PC-3 (cell line): ENCODE measurements at regions of chr10 and their contacts with region 1.

Region 1: GRCh38 chr10:95601116-95601719 is 40.0 kb upstream of the SORBS1 start:
- DNase-seq: peak; percentile 89
- ATAC-seq: peak; percentile 94
- H3K4me3 ChIP-seq: no peak overlapping the region
- H3K27ac ChIP-seq: no peak overlapping the region
- H3K4me1 ChIP-seq: no peaks in the 10 kb centered on the region
- H3K27me3 ChIP-seq: no peaks in the 10 kb centered on the region
- CTCF ChIP-seq: peak; percentile 93

Region 2: DNA sequence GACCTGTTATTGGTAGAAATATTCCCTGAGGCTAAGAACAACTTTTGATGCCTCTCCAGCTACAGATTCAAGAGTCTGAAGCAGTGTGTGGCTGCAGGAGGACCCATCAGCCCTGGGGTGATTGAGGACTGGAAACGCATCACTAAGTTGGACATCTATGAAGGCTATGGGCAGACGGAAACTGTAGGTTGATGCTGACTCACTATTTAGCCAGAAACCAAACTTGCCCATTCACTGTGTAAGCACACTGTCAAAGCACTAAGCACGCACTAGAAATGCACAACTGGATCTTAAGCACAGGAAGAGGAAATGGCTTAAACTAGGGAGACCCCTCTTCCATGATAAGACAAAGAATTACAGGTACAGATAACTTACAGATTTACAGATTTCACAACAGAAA is 386.4 kb before region 1 on chr10:
- CTCF ChIA-PET with region 1: no interaction called
- POLR2A ChIA-PET with region 1: no interaction called
- intact Hi-C with region 1: loop called (anchors 10 kb)
- DNase-seq: peak; percentile 87
- ATAC-seq: peak; percentile 95
- H3K4me3 ChIP-seq: peak overlapping the region; percentile 44; the same call in 1 of the 2 replicates
- H3K27ac ChIP-seq: peak overlapping the region; percentile 94
- H3K4me1 ChIP-seq: peaks cover 57% of the 10 kb centered on the region
- H3K27me3 ChIP-seq: no peaks in the 10 kb centered on the region
- CTCF ChIP-seq: no peak

Region 3: DNA sequence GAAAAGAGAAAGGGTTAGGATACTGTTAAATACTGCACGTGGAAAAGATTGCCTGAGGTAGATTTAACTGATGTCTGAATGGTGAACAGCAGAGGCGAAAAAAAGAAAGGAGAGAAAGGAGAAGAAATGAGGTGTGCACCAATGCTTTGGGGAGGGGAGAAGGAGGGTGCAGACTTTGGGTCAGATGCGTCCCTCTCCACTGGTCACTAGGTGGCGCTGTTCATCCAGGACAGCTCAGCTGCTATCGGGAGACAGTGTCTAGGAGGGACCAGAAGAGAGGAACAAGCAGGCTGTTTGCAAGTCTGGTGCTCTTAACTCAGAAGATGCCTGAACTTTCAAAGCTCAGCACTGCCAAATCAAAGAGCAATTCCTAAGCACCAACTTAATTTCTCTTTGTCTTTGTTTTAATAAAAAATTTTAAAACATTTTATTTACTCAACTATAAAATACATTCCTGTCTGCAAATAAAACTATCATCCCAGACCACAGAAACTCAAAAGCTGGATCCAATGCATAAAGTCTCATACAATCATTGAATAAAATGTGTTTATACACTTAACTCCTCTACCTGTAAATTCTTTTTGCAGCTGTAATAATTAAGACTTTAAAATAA is 226.5 kb before region 1 on chr10:
- CTCF ChIA-PET with region 1: interaction called, 11 read pairs
- POLR2A ChIA-PET with region 1: no interaction called
- intact Hi-C with region 1: loop called (anchors 1 kb)
- DNase-seq: peak; percentile 82
- ATAC-seq: peak; percentile 99
- H3K4me3 ChIP-seq: no peak overlapping the region
- H3K27ac ChIP-seq: no peak overlapping the region
- H3K4me1 ChIP-seq: no peaks in the 10 kb centered on the region
- H3K27me3 ChIP-seq: no peaks in the 10 kb centered on the region
- CTCF ChIP-seq: peak; percentile 86

Region 4: DNA sequence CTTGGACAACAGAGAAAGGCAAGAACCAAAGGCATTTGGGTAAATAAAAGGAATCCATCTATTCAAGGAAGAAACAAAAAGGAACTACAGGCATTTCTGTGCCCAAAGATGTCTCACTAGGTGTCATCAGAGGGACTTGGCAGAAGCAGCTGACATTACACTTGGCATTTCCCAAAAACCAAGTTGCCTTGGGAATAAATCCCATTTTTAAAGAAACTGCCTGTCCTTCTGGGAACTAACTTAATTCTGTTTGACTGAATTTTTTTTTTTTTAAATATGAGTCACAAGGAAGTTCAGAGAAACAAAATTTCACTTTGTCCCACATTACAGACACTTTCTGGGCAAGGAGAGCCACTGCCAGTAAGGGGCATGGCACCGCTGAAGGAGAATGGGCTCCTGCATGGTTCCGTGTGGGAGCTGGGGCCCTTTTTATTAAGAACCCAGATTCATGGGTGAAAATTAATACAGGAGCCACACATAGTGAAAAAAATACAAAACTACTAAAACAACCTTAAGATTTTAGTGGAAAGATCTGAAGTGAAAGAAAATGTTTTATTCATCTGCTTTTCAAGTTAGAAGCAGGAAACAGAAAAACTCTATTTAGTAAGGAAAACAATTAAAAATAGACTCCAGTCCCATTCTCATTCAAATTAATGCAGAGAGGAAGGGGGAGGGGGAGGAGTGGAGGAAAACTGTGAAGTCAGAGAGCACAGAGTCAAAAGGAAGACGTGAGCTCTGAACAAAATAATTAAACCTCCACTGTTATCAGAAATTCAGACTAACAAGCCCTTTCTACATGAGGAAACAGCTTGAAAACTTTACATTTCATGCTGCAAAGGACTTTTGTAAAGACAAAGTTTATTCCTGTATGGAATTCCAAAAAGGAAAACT is 192.0 kb before region 1 on chr10:
- CTCF ChIA-PET with region 1: no interaction called
- POLR2A ChIA-PET with region 1: interaction called, 14 read pairs
- intact Hi-C with region 1: no loop called
- DNase-seq: peak; percentile 66
- ATAC-seq: peak; percentile 55
- H3K4me3 ChIP-seq: peak overlapping the region; percentile 59
- H3K27ac ChIP-seq: peak overlapping the region; percentile 100
- H3K4me1 ChIP-seq: peaks cover 49% of the 10 kb centered on the region
- H3K27me3 ChIP-seq: no peaks in the 10 kb centered on the region
- CTCF ChIP-seq: no peak

Region 5: DNA sequence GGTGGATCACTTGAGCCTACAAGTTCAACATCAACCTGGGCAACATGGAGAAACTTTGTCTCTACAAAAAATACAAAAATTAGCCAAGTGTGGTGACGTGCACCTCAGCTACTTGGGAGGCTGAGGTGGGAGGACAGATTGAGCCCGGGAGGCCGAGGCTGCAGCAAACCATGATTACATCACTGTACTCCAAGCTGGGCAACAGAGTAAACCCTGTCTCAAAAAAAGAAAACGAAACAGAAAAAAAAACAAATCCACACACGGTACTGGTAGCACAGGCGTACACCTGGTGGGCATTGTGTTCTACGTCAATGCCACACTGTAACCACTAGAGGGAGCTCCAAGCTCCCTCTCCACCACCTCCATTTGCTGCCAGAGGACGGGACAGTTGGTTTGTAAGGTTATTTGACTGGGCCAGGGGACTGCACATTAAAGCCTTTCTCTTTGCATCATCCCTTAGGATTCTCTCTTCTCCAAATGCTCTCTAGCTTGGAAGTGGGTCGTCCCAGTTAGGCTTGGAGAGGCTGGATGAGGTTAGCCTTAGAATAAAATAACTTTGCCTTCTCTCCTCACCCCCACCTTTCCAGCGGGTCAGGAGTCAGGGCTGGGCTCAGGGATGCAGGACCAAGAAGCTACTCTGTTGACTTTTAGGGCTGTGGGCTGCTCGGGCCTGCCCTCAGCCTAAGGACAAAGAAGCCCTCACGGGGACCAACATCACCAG is 170.8 kb before region 1 on chr10:
- CTCF ChIA-PET with region 1: interaction called, 10 read pairs
- POLR2A ChIA-PET with region 1: no interaction called
- intact Hi-C with region 1: loop called (anchors 1 kb)
- DNase-seq: peak; percentile 75
- ATAC-seq: peak; percentile 95
- H3K4me3 ChIP-seq: peak overlapping the region; percentile 34
- H3K27ac ChIP-seq: peak overlapping the region; percentile 21
- H3K4me1 ChIP-seq: peaks cover 10% of the 10 kb centered on the region
- H3K27me3 ChIP-seq: no peaks in the 10 kb centered on the region
- CTCF ChIP-seq: peak; percentile 90

Region 6: GRCh38 chr10:95445837-95446486 is 155.3 kb before region 1 on chr10:
- CTCF ChIA-PET with region 1: no interaction called
- POLR2A ChIA-PET with region 1: no interaction called
- intact Hi-C with region 1: loop called (anchors 1 kb)
- DNase-seq: peak; percentile 84
- ATAC-seq: peak; percentile 61
- H3K4me3 ChIP-seq: no peak overlapping the region
- H3K27ac ChIP-seq: peak overlapping the region; percentile 31
- H3K4me1 ChIP-seq: peaks cover 18% of the 10 kb centered on the region
- H3K27me3 ChIP-seq: no peaks in the 10 kb centered on the region
- CTCF ChIP-seq: peak; percentile 78

Region 7: GRCh38 chr10:95561182-95562075 is 39.8 kb before region 1 on chr10 and contains the start of gene SORBS1:
- CTCF ChIA-PET with region 1: no interaction called
- POLR2A ChIA-PET with region 1: no interaction called
- intact Hi-C with region 1: loop called (anchors 2 kb)
- DNase-seq: peak; percentile 94
- ATAC-seq: peak; percentile 99
- H3K4me3 ChIP-seq: peak within 1 kb of the TSS; percentile 93
- H3K27ac ChIP-seq: no peak within 1 kb of the TSS
- H3K4me1 ChIP-seq: no peaks in the 10 kb centered on the region
- H3K27me3 ChIP-seq: no peaks in the 10 kb centered on the region
- CTCF ChIP-seq: no peak
- total RNA-seq, gene SORBS1: 3.7 and 4.1 TPM in 2 replicates

Region 8: DNA sequence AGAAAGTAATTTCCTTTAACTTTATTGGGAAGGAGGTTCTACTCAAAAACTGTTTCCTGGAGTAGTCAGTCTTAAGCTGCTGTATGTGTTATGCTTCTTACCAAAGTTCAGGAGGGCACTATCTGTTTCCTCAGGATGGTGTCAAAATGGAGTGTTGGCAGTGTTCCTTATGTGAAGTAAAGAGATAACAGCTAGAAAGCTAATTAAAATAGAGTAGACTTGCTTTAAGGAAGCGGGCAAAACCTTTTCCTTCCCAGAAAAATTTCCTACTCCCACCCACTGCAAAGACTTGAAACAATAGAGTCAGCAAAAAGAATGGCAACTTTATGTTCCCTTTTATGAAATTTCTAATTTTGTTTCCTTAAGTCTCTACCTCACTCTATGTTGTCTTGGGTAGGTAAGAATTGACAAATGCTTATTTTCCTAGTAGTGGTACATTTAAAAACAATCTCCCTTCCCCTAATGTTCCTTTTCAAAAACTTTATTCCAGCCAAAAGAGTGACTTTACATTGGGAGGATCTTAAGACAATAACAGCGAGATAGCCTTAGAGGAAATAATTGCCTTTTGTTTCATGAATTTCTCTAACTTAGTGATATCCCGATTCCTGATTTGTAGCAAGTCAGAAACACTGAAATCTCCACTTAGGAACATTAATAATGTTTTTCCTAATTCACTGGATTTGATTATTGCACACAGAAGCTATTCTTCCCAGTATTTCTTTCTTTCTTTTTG is 128.3 kb after region 1 on chr10:
- CTCF ChIA-PET with region 1: no interaction called
- POLR2A ChIA-PET with region 1: no interaction called
- intact Hi-C with region 1: no loop called
- DNase-seq: no peak
- ATAC-seq: no peak
- H3K4me3 ChIP-seq: no peak overlapping the region
- H3K27ac ChIP-seq: no peak overlapping the region
- H3K4me1 ChIP-seq: no peaks in the 10 kb centered on the region
- H3K27me3 ChIP-seq: no peaks in the 10 kb centered on the region
- CTCF ChIP-seq: no peak